GM18951 (cell line): ENCODE measurements at regions of chr7 and their contacts with region 1.

Region 1: GRCh38 chr7:28926871-28927597 is 31.1 kb downstream of the TRIL start:
- POLR2A ChIP-seq: no peak

Region 2: DNA sequence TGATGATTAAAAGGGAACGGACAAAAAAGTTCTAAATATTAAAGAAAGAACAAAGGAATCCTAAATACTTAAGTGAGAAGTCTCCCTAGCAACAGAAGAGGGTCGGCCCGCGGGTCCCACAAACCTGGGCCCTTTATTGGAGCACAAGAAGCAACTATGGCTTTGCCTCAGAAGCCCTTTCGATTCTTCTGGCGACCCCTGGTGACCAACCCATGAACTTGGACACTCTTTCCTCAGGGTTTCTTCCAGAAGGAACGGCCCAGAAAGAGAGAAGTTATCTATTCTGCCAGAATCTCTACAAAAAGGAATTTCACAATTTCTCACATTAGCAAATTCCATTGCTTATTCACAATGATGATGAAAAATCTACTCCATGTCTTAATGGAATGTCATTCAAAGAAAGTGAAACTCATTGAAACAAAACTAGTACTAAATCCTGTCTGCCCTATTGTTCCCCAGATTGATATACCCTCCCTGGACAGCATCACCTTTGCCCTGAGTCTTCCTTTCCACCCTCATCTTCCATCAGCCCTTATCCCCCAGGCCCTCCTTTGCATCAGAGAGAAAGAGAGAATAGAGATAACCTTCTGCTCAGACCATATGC is 175.6 kb after region 1 on chr7:
- in situ Hi-C with region 1: loop called (anchors 5 kb)
- POLR2A ChIP-seq: no peak

Region 3: GRCh38 chr7:29177963-29178600 is 251.0 kb after region 1 on chr7:
- in situ Hi-C with region 1: no loop called
- POLR2A ChIP-seq: no peak

Region 4: DNA sequence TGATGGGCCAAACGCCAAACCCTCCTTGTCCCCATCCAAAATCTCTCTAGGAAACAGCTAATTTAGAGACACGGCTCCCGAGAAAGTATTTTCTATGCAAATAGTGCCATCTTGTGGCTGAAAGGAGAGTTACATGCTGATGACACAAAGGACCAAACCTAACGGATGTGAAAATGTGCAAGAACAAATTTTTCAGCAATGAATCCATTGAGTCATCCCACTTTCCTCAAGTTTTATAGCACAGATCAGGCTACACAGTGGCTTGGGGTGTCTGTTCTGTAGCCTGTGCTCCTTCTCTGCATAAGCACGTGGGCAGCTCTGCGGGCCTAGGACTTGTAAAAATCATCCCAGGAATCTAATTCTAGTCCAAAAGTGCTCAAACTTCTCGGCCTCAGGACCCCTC is 481.8 kb after region 1 on chr7:
- in situ Hi-C with region 1: loop called (anchors 10 kb)
- POLR2A ChIP-seq: no peak